Left cardiac atrium (tissue), 4 donors: ENCODE measurements at regions of chr22 and their contacts with region 1.

Region 1: DNA sequence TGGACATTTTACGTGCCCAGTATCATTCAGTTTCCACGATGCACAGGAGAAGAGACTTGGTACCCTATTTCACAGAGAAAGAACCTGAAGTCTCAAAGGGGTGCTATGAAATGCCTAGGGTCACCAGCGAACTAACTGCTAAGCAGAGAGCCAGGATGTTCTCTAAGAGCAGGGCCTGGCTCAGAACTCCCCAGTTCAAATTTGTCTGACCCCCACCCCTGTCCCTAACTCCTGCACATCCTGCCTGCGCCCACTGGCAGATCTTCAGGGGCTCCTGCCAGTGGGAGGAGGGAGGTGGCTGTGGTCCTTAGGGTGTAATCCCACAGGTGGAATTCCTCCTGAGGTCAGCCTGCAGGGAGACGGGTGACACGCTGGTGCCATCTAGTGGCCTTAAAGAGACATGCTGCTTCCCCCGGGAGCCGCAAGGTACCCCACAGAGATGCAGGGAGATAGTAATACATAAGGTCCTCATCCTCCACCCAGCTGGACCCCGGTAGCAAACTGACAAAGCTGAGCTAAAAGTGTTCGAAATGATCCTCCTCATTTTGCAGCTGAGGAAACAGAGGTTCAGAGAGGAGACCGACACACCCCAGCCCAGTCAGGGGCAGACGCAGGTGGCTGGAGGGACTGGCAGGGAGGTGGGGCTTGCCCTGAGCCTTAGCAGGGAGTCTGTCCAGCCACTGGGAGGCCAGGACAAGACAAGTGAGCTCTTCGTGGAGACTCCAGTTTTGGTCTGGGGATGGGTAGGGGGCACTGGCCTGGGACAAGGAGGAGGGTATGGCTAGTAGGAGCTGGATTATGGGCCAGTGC is 34.1 kb downstream of the MB start:
- DNase-seq: peak; percentile 56
- ATAC-seq: peak in 1 of 2 donors; percentile 45

Region 2: DNA sequence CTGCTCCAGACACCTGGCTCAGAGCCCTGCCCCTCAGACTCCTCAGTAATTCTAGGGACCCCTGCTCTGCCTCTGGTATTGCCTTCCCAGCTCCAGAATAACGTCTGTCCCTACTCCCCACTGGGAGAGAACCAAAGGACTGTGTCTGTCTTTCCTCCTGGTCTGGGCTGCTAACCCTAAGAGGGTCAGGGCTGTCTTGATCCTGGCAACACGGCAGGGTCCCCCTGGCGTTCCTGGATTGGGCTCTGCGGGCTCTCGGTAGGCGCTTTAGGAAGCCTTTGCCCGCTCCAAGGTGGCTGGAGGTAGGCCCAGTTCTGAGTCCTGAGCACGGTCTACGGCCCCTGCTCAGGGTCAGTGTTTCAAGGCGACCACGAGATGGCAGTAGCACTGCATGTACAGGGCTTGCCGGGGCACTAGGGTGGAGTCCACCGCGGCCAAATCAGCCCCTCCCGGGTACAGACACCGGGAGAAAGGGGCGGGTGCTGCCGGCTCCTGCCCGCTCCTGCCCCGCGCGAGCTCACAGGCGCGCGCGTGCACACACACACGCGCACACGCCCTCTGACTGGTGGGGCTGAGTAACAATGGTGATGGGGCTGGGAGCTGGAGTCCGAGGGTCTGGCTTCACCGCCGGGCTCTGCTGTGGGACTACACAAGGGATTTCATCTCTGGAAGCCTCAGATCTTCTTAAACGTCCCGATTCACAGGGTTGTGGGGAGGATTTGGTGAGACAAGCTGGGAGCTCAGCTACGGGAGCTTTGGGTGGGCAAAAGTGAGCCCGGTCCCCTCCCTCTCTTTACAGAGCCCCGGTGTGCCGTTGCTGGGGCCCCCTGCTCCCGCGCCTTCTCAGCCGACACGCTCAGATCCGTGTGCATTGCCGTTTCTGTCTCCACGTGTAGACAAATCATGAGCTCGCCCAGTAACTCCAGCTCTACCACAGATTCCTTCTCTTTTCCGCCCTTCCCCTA is 232.2 kb before region 1 on chr22:
- intact Hi-C with region 1: loop called (anchors 2 to 10 kb)
- DNase-seq: peak; percentile 94
- ATAC-seq: peak; percentile 89 to 91

Region 3: GRCh38 chr22:35430897-35431322 is 152.2 kb before region 1 on chr22:
- intact Hi-C with region 1: loop called (anchors 1 to 5 kb)
- DNase-seq: peak; percentile 91
- ATAC-seq: peak; percentile 97 to 98

Region 4: DNA sequence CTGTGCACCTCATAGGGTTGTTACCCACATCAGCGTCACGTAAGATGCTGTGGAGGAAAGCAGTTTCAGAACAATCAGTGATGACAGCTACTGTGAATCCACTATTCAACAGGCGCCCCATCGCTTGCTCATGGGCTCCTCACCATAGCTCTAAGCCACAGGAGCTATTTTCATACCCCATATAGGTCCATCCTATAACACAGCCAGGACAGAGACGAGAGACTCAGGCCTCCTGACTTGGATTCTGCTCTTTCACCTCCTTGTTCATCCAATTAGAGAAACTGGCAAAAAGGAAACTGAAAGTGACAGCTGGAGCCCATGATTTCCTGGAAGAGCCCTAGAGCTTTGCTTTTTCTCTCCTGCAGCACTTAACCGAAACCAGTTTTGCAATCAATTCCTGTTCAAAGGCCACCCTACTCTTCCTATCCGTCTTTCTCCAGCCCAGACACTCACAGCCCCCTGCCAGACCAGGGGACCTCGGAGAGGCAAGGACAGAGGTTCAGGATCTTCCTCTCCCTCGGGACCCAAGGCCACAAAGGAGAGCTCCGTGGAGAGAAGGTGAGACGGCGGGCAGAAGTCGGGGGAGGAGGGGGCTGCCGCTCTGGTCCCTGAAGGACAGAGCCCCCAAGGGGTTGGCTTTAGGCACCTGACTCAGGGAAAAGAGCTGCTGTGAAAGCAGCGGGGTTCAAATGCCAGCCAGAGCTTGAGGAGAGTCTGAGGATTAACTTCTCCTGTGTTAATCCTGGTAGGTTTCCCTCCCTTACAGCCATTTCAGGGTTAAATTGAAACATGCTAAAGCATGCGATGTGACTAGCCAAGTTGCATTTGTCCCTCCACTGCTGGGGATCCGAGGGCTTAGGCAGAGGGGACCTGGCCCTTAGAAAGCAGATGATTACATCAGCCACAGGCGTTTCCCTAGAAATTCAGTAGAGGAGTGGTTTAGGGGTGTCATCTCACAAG is 65.3 kb after region 1 on chr22 and contains the start of gene APOL6:
- intact Hi-C with region 1: no loop called
- DNase-seq: no peak
- ATAC-seq: peak; percentile 60 to 72
- total RNA-seq, gene APOL6: 20.6 to 23.0 TPM